Sigmoid colon (tissue), 7 donors: ENCODE measurements at regions of chr5 and their contacts with region 1.

Region 1: GRCh38 chr5:138282920-138283742 is 8.7 kb upstream of the GFRA3 start:
- DNase-seq: peak; percentile 63
- H3K4me3 ChIP-seq: no peak overlapping the region
- H3K27ac ChIP-seq: no peak overlapping the region
- H3K4me1 ChIP-seq: no peaks in the 10 kb centered on the region
- H3K27me3 ChIP-seq: no peaks in the 10 kb centered on the region
- CTCF ChIP-seq: peak in 3 of 4 experiments; percentile 32 to 56 (median 36)
- EP300 ChIP-seq: no peak
- POLR2A ChIP-seq: no peak

Region 2: GRCh38 chr5:138223532-138223931 is 59.6 kb before region 1 on chr5:
- intact Hi-C with region 1: loop called (anchors 1 kb)
- DNase-seq: no peak
- H3K4me3 ChIP-seq: no peak overlapping the region
- H3K27ac ChIP-seq: no peak overlapping the region
- H3K4me1 ChIP-seq: peaks cover 0 to 7% (median 0%) of the 10 kb centered on the region in 4 donors
- H3K27me3 ChIP-seq: no peaks in the 10 kb centered on the region
- CTCF ChIP-seq: no peak
- EP300 ChIP-seq: no peak
- POLR2A ChIP-seq: no peak